Activated T-helper 2 cell treated with anti-CD3 and anti-CD28 coated beads, Interferon-gamma antibody, Interleukin-2, Interleukin-4, amounts not matched to agents 10 μg/mL and 5 μg/mL and 100 μg/mL, durations not matched to agents 14 hours and 24 hours and 36 hours (primary cell): ENCODE measurements at regions of chr3 and their contacts with region 1.

Region 1: DNA sequence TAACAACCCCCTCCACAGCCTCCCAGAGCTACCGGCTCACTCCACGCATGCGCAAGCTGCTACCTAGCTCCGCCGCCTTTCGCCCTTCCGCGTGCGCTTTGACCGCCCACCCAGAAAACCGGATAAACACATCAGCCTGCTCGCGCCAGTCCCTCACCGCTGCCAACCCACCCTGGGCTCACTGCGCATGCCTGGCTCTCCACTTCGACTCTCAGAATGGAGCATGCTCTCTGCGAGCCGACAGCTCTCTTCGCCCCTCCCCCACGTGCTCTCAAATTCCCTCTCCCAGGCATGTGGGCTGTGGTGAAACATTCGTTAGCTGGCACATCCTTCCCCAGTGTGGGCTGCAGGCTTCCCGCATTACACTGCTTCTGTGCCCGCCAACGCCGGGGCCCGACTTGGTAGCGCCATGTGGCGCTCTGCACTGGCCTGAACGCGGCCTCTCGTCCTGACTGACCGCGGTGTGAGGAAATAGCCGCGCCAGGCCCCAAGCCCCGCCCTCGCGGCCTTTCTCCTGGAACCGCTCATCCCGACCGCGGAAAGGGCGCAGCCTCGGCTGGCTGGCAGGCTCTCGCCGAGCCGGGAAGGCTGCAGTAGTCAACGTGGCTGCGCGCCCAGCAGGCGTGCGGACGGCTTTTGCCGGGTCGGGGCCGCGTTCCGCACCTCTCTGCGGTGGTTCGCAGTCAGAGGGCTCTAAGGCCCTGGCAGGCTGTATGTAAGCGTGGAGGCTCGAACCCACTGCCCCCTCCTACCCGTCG is 445 bp upstream of the MSL2 start:
- DNase-seq: peak; percentile 99
- H3K4me3 Mint-ChIP-seq: peak overlapping the region; percentile 83
- H3K27ac Mint-ChIP-seq: peak overlapping the region; percentile 93
- H3K4me1 Mint-ChIP-seq: peaks cover 28% of the 10 kb centered on the region
- H3K27me3 Mint-ChIP-seq: no peaks in the 10 kb centered on the region

Region 2: GRCh38 chr3:134485718-134486576 is 1710.6 kb before region 1 on chr3 and contains the starts of genes ANAPC13 and CEP63:
- intact Hi-C with region 1: loop called (anchors 2 kb)
- DNase-seq: peak; percentile 92
- H3K4me3 Mint-ChIP-seq: peak within 1 kb of the TSS; percentile 97
- H3K27ac Mint-ChIP-seq: peak within 1 kb of the TSS; percentile 99
- H3K4me1 Mint-ChIP-seq: peaks cover 37% of the 10 kb centered on the region
- H3K27me3 Mint-ChIP-seq: no peaks in the 10 kb centered on the region
- total RNA-seq, gene ANAPC13: 27.3 and 27.4 TPM in 2 replicates
- total RNA-seq, gene CEP63: 18.0 and 20.1 TPM in 2 replicates

Region 3: GRCh38 chr3:136075218-136075808 is 121.3 kb before region 1 on chr3:
- intact Hi-C with region 1: loop called (anchors 5 kb)
- DNase-seq: peak; percentile 53
- H3K4me3 Mint-ChIP-seq: no peak overlapping the region
- H3K27ac Mint-ChIP-seq: no peak overlapping the region
- H3K4me1 Mint-ChIP-seq: peaks cover 5% of the 10 kb centered on the region
- H3K27me3 Mint-ChIP-seq: peaks cover 7% of the 10 kb centered on the region

Region 4: DNA sequence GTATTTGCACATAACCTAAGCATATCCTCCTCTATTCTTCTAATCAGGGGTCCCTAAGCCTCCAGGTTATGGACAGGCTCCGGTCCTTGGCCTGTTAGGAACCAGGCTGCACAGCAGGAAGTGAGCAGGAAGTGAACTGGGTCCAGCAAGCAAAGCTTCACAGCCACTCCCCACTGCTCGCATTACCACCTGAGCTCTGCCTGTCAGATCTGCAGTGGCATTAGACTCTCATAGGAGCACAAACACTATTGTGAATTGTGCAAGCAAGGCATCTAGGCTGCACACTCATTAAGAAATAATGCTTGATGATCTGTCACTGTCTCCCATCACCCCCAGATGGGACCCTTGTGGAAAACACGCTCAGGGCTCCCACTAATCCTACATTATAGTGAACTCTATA is 10.2 kb before region 1 on chr3:
- intact Hi-C with region 1: loop called (anchors 1 kb)
- DNase-seq: no peak
- H3K4me3 Mint-ChIP-seq: no peak overlapping the region
- H3K27ac Mint-ChIP-seq: no peak overlapping the region
- H3K4me1 Mint-ChIP-seq: peaks cover 55% of the 10 kb centered on the region
- H3K27me3 Mint-ChIP-seq: no peaks in the 10 kb centered on the region

Region 5: GRCh38 chr3:136350132-136350531 is 153.6 kb after region 1 on chr3:
- intact Hi-C with region 1: loop called (anchors 5 kb)
- DNase-seq: no peak
- H3K4me3 Mint-ChIP-seq: no peak overlapping the region
- H3K27ac Mint-ChIP-seq: no peak overlapping the region
- H3K4me1 Mint-ChIP-seq: peaks cover 12% of the 10 kb centered on the region
- H3K27me3 Mint-ChIP-seq: no peaks in the 10 kb centered on the region

Region 6: DNA sequence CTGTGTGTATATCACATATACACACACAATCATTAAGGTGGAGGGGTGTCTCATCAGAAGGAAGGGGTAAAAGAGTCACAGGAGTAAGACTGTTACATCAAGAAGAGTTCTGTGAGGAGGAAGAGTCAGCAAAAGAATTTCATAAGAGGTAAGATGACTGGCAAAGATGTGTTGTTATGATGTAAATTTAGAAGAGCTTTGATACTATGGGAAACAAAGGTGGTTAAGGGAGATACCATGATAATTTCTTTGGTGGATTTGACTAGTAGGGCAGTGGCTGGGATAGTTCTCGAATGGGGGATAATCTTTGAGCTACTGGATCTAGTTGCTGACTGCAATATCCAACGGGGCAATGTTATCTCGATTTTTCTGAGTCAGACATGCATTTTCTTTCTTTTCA is 494.0 kb after region 1 on chr3:
- intact Hi-C with region 1: no loop called
- DNase-seq: no peak
- H3K4me3 Mint-ChIP-seq: no peak overlapping the region
- H3K27ac Mint-ChIP-seq: no peak overlapping the region
- H3K4me1 Mint-ChIP-seq: peaks cover 22% of the 10 kb centered on the region
- H3K27me3 Mint-ChIP-seq: no peaks in the 10 kb centered on the region

Region 7: DNA sequence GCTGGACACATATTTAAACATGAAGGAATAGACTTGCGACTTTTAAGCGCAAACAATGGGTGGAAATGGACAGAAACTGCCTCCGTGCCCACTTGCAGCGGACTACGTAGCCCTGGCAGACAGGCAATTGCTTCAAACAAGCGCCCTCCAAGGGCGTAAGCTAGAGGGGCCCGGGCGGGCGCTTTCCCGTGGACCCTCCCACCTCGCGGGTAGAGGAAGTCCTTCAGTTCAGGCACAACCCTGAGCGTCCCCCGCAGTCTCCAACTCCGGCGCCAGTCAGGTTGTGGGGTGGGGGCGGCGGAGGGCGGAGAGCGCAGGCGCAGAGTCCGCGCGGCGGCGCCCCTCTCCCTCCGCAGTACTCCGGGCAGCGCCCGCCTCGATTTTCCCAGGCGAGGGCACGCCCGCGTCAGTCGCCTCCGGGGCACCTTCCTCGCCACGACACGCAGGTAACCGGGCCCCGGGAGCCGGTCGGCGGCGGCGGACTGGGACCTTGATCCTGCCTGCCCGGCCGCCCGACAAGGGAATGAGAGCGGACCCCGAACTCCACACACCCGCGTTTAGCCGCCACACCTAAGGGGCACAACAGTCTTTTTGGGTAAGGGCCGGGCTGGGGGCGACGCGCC is 622.3 kb after region 1 on chr3 and contains the start of gene SLC35G2:
- intact Hi-C with region 1: loop called (anchors 1 kb)
- DNase-seq: no peak
- H3K4me3 Mint-ChIP-seq: peak within 1 kb of the TSS; percentile 85
- H3K27ac Mint-ChIP-seq: peak within 1 kb of the TSS; percentile 83
- H3K4me1 Mint-ChIP-seq: peaks cover 23% of the 10 kb centered on the region
- H3K27me3 Mint-ChIP-seq: peaks cover 31% of the 10 kb centered on the region
- total RNA-seq, gene SLC35G2: 7.3 and 7.7 TPM in 2 replicates

Region 8: GRCh38 chr3:136919799-136920580 is 723.4 kb after region 1 on chr3:
- intact Hi-C with region 1: loop called (anchors 2 kb)
- DNase-seq: no peak
- H3K4me3 Mint-ChIP-seq: no peak overlapping the region
- H3K27ac Mint-ChIP-seq: peak overlapping the region; percentile 64
- H3K4me1 Mint-ChIP-seq: peaks cover 64% of the 10 kb centered on the region
- H3K27me3 Mint-ChIP-seq: no peaks in the 10 kb centered on the region